ENCODE measurements at regions of chrX and their contacts with region 1.

Region 1: GRCh38 chrX:136711147-136711546 is 63.2 kb downstream of the CD40LG start:
- DNase-seq: peak; percentile 56
- H3K4me3 Mint-ChIP-seq: no peak overlapping the region
- H3K27ac Mint-ChIP-seq: peak overlapping the region; percentile 95
- H3K4me1 Mint-ChIP-seq: peaks cover 74% of the 10 kb centered on the region
- H3K27me3 Mint-ChIP-seq: no peaks in the 10 kb centered on the region

Region 2: DNA sequence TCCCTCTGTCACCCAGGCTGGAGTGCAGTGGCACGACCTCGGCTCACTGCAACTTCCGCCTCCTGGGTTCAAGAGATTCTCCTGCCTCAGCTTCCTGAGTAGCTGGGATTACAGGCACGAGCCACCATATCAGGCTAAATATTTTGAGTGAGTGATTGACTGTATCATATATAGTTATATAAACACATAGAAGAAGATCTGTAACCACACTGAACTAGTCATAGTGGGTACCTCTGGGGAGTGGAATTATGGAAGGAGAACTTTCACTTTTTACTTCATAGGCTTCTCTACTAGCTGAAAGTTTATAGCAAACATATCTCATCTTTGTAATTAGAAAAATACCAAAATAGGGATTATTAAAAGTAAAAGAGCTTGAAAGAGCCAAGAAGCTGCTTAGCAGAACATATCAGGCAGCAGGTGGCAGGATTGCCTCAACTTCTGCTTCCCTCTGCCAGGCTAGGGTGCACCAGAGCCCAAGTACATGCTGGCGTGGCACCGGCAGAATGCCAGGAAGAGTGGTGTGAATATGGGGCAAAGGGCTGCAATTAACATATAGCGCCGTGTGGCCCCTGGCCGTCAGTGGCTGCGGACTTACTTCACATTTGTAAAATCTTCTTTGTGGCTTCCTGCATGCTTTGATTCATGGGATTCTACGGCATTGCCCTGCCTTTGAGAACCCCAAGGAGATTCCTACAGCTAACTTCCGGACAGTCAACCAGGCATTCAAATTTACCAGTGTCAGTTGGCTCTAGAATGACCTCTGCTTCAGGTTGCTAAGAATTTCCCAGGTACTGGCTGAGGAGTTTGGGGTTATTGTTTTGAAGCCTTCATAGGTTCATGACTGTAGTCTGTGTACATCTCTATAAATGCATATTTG is 102.6 kb before region 1 on chrX:
- CTCF ChIA-PET with region 1: interaction called, 13 read pairs
- intact Hi-C with region 1: loop called (anchors 1 kb)
- DNase-seq: peak; percentile 80
- H3K4me3 Mint-ChIP-seq: peak overlapping the region; percentile 46
- H3K27ac Mint-ChIP-seq: peak overlapping the region; percentile 79
- H3K4me1 Mint-ChIP-seq: peaks cover 54% of the 10 kb centered on the region
- H3K27me3 Mint-ChIP-seq: no peaks in the 10 kb centered on the region

Region 3: DNA sequence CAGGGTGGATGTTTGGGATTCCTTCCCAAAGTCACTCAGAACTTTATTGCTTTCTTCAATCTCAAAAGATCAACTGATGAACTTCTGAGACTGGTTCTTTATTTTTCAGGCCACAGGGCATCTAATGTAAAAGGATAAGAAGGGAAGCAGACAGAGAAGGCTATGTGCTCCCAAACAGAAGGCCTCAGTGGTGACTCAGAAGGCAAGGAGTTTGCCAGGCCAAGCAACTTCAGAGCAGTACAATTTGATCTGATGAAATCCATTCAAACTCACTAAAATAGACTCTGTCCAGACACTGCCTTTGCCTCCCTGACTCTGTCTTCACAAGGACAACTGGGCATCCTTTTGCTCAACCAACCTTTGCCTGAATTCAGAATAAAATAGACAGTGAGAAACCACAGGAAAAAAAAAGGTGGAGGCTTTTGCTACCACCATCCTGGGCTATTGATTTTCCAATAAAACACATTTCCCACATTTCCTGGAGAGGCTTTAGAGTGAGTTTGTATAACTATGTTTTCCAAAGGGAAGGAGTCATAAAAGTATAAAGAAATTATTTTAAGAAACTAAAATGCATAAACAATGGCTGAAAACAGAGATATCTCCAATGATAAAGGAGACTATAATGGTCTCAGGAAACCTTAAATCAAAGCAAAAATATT is 14.4 kb after region 1 on chrX:
- CTCF ChIA-PET with region 1: interaction called, 6 read pairs
- intact Hi-C with region 1: loop called (anchors 1 kb)
- DNase-seq: no peak
- H3K4me3 Mint-ChIP-seq: no peak overlapping the region
- H3K27ac Mint-ChIP-seq: no peak overlapping the region
- H3K4me1 Mint-ChIP-seq: peaks cover 44% of the 10 kb centered on the region
- H3K27me3 Mint-ChIP-seq: no peaks in the 10 kb centered on the region

Region 4: DNA sequence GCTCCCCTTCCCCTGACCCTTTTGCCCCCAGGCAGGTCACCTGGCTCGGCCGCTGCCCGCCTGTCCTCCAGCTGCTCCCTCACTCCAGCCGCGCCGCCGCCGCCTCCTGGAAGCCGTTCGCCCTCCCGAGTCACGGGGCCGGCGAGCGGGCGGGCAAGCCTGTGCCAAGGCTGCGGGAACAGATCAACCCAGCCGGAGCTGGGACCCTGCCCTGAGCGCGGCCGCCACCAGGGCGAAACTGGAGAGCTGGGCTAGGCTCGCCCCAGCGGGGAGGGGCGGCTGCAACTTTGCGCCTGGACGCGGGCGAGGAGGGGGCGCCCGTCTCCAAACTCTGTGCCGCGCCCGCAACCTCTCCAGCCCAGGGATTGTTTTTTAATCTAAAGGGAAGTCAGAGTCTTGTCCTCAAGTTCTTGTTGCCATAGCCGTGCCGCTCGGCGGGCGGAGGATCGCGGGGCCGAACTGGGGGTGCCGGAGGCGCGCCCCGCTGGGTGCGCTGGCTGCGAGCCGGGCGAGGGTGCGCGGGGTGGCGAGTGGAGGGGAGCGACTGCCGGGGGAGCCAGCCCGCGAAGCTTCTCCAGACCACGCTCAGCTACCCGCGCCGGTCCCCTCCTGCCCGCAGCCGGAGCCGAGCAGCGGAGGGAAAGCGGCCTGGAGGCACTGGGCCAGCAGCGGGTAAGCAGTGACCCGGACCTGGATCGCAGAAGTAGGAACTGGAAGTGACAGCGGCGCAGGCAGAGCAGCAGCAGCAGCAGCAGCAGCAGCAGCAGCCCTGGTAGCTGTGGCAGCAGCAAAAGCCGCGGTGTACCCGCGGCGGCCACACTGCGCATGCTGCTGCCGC is 56.2 kb after region 1 on chrX:
- CTCF ChIA-PET with region 1: no interaction called
- intact Hi-C with region 1: loop called (anchors 2 kb)
- DNase-seq: peak; percentile 50
- H3K4me3 Mint-ChIP-seq: peak overlapping the region; percentile 76
- H3K27ac Mint-ChIP-seq: peak overlapping the region; percentile 90
- H3K4me1 Mint-ChIP-seq: peaks cover 56% of the 10 kb centered on the region
- H3K27me3 Mint-ChIP-seq: no peaks in the 10 kb centered on the region

Region 5: GRCh38 chrX:136866337-136867095 is 155.4 kb after region 1 on chrX:
- CTCF ChIA-PET with region 1: no interaction called
- intact Hi-C with region 1: loop called (anchors 5 kb)
- DNase-seq: no peak
- H3K4me3 Mint-ChIP-seq: peak overlapping the region; percentile 32
- H3K27ac Mint-ChIP-seq: peak overlapping the region; percentile 87
- H3K4me1 Mint-ChIP-seq: peaks cover 52% of the 10 kb centered on the region
- H3K27me3 Mint-ChIP-seq: no peaks in the 10 kb centered on the region

Region 6: DNA sequence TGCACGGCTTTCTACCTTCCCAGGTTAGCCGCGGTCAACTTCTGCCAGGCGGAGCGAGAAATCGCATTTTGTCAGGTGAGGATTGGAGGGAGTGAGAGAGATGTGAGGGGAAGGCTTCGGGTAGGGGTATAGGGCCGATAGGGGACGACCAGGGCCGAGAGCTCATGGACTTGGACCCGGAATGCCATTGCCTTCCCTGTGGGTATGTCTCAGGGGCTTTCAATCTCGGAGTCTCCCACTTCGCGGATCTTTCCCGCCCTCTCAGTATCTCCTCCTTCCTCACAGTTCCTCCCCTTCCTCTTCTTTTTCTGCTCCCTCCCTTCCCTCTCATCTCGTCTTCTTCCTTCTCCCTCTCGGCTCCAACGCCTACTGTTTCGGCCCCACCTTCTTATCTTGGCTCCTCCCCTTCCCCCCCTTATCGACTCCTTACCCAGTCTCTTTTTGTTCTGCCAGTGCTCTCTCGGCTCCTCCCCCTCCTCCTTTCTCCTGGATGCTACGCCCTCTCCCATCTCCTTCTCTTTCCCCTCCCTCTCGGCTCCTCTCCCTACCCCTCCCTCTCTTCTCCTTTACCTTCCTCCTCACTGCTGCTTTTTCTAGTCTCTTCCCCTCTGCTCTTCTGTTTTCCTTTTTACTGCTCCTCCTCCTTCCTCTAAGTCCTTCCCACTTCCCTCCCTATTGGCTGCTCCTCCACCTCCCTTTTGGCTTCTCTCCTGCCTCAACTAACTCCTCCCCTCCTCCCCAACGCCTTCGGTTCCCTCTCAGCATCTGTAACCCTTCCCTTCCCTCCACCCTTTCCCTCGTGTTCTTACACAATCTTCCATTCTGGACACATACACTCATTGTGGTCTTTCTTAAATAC is 198.8 kb after region 1 on chrX:
- CTCF ChIA-PET with region 1: interaction called, 3 read pairs
- intact Hi-C with region 1: loop called (anchors 1 kb)
- DNase-seq: peak; percentile 75
- H3K4me3 Mint-ChIP-seq: peak overlapping the region; percentile 89
- H3K27ac Mint-ChIP-seq: peak overlapping the region; percentile 87
- H3K4me1 Mint-ChIP-seq: peaks cover 15% of the 10 kb centered on the region
- H3K27me3 Mint-ChIP-seq: no peaks in the 10 kb centered on the region

Region 7: DNA sequence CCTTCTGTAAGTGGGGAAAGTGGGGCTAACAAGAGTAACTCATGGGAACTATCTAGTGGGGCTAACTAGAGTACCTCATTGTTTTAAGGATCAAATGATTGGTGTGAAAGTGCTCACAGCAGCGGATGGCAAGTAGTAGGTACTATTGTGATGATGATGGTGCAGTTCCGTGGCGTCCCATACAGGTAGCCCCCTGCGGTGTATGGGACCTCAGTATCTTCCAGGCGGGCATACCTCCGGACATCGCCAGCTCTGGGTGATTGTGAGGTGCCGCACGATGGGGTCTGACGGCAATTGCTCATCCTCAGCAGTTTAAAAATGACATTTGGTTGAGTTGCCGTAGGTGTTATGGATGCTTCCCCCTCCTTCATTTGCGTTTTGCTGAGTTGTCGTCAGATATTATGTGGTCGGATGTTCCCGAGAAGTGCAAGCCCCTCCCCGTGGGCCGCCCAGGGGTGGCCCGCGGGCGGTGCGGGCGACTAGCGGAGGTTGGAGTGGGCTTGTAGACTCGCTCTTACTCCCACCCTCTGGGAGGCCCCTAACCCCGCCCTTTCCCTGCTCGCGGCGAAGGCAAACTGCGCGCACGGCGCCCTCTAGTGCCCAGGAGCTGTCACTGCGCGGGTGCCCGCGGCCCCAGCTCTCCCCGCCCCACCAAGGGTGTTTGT is 341.0 kb after region 1 on chrX:
- CTCF ChIA-PET with region 1: no interaction called
- intact Hi-C with region 1: loop called (anchors 5 kb)
- DNase-seq: peak; percentile 82
- H3K4me3 Mint-ChIP-seq: peak overlapping the region; percentile 86
- H3K27ac Mint-ChIP-seq: peak overlapping the region; percentile 63
- H3K4me1 Mint-ChIP-seq: peaks cover 4% of the 10 kb centered on the region
- H3K27me3 Mint-ChIP-seq: peaks cover 20% of the 10 kb centered on the region

Measured in activated naive CD4-positive, alpha-beta T cell treated with anti-CD3 and anti-CD28 coated beads for 36 hours (primary cell).